CD14-positive monocyte (primary cell): ENCODE measurements at regions of chr20 and their contacts with region 1.

Region 1: DNA sequence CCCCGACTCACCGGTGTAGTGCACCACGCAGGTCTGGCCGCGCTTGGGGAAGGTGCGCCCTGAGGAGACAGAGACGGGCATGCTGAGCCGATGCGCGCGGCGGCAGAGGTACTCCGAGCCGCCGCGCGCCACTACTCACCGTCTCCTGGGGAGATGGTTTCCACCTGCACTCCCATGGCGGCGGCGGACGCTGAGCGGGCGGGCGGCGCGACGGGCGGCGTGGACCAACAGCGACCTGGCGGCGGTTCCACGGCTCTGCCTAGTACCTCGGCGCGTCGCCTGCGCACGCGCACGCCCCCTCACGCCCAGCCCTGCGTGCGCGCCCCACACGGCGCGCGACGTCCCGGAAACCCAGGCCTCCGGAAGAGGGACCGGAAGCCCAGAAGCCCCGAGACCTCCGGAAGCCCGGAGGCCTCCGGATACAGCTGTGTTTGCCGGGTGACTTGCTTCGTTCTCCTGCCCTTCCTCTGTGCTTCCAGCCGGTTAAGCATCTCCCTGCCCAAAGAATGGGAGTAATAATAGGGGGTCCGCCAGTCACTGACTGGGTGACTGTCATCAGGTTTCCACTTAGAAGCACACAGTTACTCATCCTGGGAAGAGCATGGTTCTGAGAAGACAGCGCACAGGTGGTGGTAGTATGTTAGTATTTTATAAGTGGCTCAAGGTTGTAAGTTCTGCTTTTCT is at the start of gene FKBP1A:
- DNase-seq: peak; percentile 85 to 91 (median 86)
- H3K4me3 ChIP-seq: peak within 1 kb of the TSS; percentile 89 to 98 (median 98)
- H3K4me3 Mint-ChIP-seq: peak within 1 kb of the TSS; percentile 92 to 96
- H3K27ac ChIP-seq: peak within 1 kb of the TSS; percentile 76 to 85
- H3K27ac Mint-ChIP-seq: peak within 1 kb of the TSS; percentile 93 to 98 (median 96)
- H3K4me1 ChIP-seq: peaks cover 49 to 53% of the 10 kb centered on the region in 2 donors
- H3K4me1 Mint-ChIP-seq: peaks cover 62% of the 10 kb centered on the region
- H3K27me3 ChIP-seq: peaks cover 0 to 6% of the 10 kb centered on the region in 2 donors
- H3K27me3 Mint-ChIP-seq: peaks cover 0 to 8% (median 8%) of the 10 kb centered on the region in 3 donors
- CTCF ChIP-seq: no peak
- polyA plus RNA-seq, gene FKBP1A: 155 to 268 (median 194) TPM

Region 2: DNA sequence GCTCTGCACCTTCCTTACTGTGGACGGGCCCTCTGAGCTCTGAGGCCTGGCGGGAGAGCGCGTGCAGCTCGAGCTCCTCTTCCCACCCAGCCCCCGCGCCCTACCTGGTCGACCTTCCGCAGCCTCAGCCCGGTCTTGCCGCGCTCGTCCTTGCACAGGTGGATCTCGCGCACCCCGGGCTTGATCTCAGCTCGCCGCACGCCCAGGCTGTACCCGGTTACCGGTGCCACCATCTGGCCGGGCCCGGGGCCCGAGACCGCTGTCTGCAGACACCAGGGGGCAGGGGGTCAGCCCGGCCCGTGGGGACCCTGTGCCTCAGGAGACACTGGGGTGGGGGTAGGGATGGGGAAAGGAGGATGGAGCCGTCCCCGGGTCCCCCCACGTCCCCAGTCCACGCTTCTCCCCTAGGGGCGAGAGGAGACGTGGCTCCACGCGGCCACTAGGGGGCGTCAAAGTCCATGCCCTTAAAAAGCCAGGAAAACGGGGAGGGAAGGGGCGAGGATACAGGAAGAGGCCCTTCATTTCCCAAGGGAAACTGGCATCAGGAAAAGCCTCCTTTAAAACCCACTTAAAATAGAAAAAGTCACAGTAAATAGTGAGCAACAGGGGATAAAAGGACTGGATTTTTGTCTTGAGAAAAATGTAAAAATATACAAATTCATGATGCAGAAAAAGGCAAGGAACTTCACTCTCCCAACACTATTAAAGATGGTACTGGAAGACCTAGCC is 79.6 kb before region 1 on chr20:
- intact Hi-C with region 1: loop called in 1 of 2 experiments (anchors 5 kb)
- DNase-seq: peak; percentile 44 to 71 (median 64)
- H3K4me3 ChIP-seq: no peak overlapping the region
- H3K4me3 Mint-ChIP-seq: no peak overlapping the region
- H3K27ac ChIP-seq: no peak overlapping the region
- H3K27ac Mint-ChIP-seq: no peak overlapping the region
- H3K4me1 ChIP-seq: peaks cover 6 to 13% of the 10 kb centered on the region in 2 donors
- H3K4me1 Mint-ChIP-seq: peaks cover 8% of the 10 kb centered on the region
- H3K27me3 ChIP-seq: no peaks in the 10 kb centered on the region
- H3K27me3 Mint-ChIP-seq: peaks cover 0 to 6% (median 0%) of the 10 kb centered on the region in 3 donors
- CTCF ChIP-seq: peak; percentile 100

Region 3: DNA sequence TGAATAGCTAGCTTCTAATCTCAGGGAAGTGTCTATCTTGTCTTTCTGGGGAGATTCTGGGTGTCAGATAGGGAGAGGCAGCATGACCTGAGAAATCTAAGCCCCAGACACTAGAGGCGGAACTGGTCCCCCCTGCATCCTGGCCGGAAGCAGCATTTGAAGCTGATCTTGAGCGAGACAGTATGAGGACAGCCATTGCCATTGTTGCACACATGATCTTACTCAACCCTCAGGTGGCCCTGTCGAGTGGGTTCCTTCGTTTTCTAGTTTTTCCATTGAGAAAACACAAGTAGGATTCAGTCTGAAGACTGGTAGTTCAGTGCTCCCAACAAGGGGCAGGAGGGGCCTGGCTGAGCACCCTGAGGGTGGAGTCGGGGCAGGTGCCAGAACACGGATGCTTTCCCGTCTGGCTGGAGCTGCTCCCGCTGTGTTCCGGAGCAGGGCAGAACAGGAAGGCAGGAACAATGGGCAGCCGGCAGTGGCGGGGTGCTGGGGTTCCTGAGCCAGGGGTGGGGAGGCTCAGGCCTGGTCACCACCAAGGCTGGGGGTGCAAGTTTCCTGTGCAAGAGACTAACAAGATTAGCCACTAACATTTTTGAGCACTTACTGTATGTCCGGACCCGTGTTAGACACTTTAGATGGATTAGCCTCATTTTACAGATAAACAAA is 56.1 kb before region 1 on chr20:
- intact Hi-C with region 1: no loop called
- DNase-seq: peak in 1 of 3 donors; percentile 36
- H3K4me3 ChIP-seq: no peak overlapping the region
- H3K4me3 Mint-ChIP-seq: peak overlapping the region in 1 of 2 donors; percentile 29
- H3K27ac ChIP-seq: no peak overlapping the region
- H3K27ac Mint-ChIP-seq: no peak overlapping the region
- H3K4me1 ChIP-seq: peaks cover 14 to 18% of the 10 kb centered on the region in 2 donors
- H3K4me1 Mint-ChIP-seq: peaks cover 28% of the 10 kb centered on the region
- H3K27me3 ChIP-seq: no peaks in the 10 kb centered on the region
- H3K27me3 Mint-ChIP-seq: peaks cover 0 to 9% (median 6%) of the 10 kb centered on the region in 3 donors
- CTCF ChIP-seq: no peak

Region 4: GRCh38 chr20:1375515-1375914 is 17.4 kb before region 1 on chr20:
- intact Hi-C with region 1: loop called in 1 of 2 experiments (anchors 2 kb)
- DNase-seq: peak; percentile 42 to 74 (median 74)
- H3K4me3 ChIP-seq: peak overlapping the region in 2 of 3 experiments; percentile 11 to 35
- H3K4me3 Mint-ChIP-seq: peak overlapping the region in 1 of 2 donors; percentile 82
- H3K27ac ChIP-seq: peak overlapping the region; percentile 57 to 83
- H3K27ac Mint-ChIP-seq: peak overlapping the region; percentile 90 to 97 (median 92)
- H3K4me1 ChIP-seq: peaks cover 61 to 63% of the 10 kb centered on the region in 2 donors
- H3K4me1 Mint-ChIP-seq: peaks cover 74% of the 10 kb centered on the region
- H3K27me3 ChIP-seq: no peaks in the 10 kb centered on the region
- H3K27me3 Mint-ChIP-seq: peaks cover 0 to 2% (median 2%) of the 10 kb centered on the region in 3 donors
- CTCF ChIP-seq: no peak

Region 5: DNA sequence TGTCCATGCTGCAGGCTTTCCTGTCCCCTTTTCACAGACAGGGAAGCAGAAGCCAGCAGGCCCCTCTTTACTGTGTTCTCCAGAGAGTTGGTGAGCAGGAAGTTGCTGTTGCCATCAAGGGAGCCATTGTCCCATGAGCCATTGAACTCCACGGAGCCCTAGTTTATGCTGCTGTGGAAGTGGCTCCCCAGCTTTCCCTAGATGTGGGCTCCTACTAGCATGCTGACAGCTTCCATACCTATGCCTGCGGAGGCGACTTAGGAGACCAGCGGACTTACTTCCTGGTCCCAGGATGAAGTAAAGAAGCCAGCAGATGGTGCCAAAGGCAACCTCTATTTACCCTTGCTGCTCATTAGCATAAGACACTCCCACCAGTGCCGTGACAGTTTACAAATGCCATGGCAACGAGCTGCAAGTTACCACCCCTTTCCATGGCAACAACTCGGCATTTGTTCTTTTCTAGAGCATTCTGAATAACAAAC is 30.7 kb after region 1 on chr20:
- intact Hi-C with region 1: no loop called
- DNase-seq: peak; percentile 64 to 81 (median 78)
- H3K4me3 ChIP-seq: no peak overlapping the region
- H3K4me3 Mint-ChIP-seq: no peak overlapping the region
- H3K27ac ChIP-seq: no peak overlapping the region
- H3K27ac Mint-ChIP-seq: peak overlapping the region in 2 of 7 donors; percentile 19 to 27
- H3K4me1 ChIP-seq: peaks cover 0 to 6% of the 10 kb centered on the region in 2 donors
- H3K4me1 Mint-ChIP-seq: peaks cover 7% of the 10 kb centered on the region
- H3K27me3 ChIP-seq: peaks cover 0 to 5% of the 10 kb centered on the region in 2 donors
- H3K27me3 Mint-ChIP-seq: peaks cover 9 to 17% (median 17%) of the 10 kb centered on the region in 3 donors
- CTCF ChIP-seq: peak; percentile 17

Region 6: DNA sequence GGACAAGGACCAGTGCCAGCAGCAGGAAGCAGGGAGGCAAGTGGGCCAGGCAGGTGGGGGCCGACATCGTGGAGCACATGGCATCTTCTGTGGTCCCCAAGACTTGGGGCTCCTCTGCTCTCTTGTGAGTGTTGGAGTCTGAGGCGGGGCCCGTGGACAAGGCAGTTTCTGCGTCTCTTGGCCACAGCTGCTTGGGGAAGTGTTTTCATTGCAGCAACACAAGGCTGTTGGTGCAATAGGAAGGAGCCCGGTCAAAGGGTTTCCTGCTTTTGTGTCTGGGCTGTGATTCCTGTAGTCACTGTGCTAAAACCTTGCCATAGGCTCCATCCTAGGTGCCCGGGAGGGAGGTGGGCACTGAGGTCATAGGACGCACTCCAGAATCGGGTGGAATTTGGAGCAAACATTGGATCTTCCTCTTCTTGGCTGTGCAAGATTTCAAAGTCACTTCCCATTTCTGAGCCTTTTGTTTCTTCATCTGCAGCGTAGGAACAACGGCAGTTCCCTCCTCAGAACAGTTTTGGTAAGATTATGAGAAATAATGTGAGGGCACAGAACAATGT is 98.4 kb after region 1 on chr20 and contains the start of gene SIRPB2:
- intact Hi-C with region 1: loop called in 1 of 2 experiments (anchors 10 kb)
- DNase-seq: peak; percentile 88 to 93 (median 89)
- H3K4me3 ChIP-seq: peak within 1 kb of the TSS; percentile 71 to 97 (median 89)
- H3K4me3 Mint-ChIP-seq: peak within 1 kb of the TSS; percentile 93 to 97
- H3K27ac ChIP-seq: peak within 1 kb of the TSS; percentile 97
- H3K27ac Mint-ChIP-seq: peak within 1 kb of the TSS; percentile 95 to 99 (median 98)
- H3K4me1 ChIP-seq: peaks cover 61 to 93% of the 10 kb centered on the region in 2 donors
- H3K4me1 Mint-ChIP-seq: peaks cover 79% of the 10 kb centered on the region
- H3K27me3 ChIP-seq: no peaks in the 10 kb centered on the region
- H3K27me3 Mint-ChIP-seq: peaks cover 0 to 3% (median 0%) of the 10 kb centered on the region in 3 donors
- CTCF ChIP-seq: no peak
- polyA plus RNA-seq, gene SIRPB2: 81.5 to 174 (median 92.8) TPM

Region 7: GRCh38 chr20:1595333-1595732 is 202.4 kb after region 1 on chr20:
- intact Hi-C with region 1: no loop called
- DNase-seq: peak in 1 of 3 donors; percentile 85
- H3K4me3 ChIP-seq: no peak overlapping the region
- H3K4me3 Mint-ChIP-seq: no peak overlapping the region
- H3K27ac ChIP-seq: no peak overlapping the region
- H3K27ac Mint-ChIP-seq: peak overlapping the region in 3 of 7 donors; percentile 87 to 89 (median 88)
- H3K4me1 ChIP-seq: peaks cover 0 to 23% of the 10 kb centered on the region in 2 donors
- H3K4me1 Mint-ChIP-seq: no peaks in the 10 kb centered on the region
- H3K27me3 ChIP-seq: no peaks in the 10 kb centered on the region
- H3K27me3 Mint-ChIP-seq: peaks cover 0 to 2% (median 0%) of the 10 kb centered on the region in 3 donors
- CTCF ChIP-seq: no peak